Activated CD4-positive, alpha-beta T cell treated with anti-CD3 and anti-CD28 coated beads for 36 hours (primary cell): ENCODE measurements at regions of chr6 and their contacts with region 1.

Region 1: DNA sequence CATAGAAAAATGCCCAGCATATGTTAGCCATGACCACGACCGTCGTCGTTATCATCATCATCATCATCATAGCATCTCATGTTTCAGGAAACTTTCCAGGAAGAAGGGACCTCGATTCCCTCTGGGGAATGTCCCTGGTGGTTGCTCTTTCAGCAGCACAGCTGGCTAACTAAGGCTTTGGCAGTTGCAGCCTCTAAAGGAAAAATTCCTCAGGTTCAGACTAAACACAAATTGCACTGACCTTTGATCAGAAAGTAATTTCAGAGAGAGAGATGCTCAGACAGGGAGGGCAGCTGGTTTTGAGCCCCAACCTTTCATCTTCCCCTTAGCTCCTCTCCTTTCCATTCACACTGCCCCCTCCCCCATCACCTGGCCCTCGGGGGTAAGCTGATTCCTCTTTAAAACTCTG is 5.6 kb upstream of the CFB start:
- DNase-seq: no peak
- ATAC-seq: no peak
- H3K4me3 Mint-ChIP-seq: no peak overlapping the region
- H3K27ac Mint-ChIP-seq: no peak overlapping the region
- H3K4me1 Mint-ChIP-seq: peaks cover 1% of the 10 kb centered on the region
- H3K27me3 Mint-ChIP-seq: peaks cover 7% of the 10 kb centered on the region

Region 2: GRCh38 chr6:31862344-31863227 is 77.7 kb before region 1 on chr6 and contains the start of gene NEU1:
- CTCF ChIA-PET with region 1: no interaction called
- POLR2A ChIA-PET with region 1: no interaction called
- intact Hi-C with region 1: no loop called
- DNase-seq: peak; percentile 100
- ATAC-seq: peak; percentile 98
- H3K4me3 Mint-ChIP-seq: peak within 1 kb of the TSS; percentile 90
- H3K27ac Mint-ChIP-seq: peak within 1 kb of the TSS; percentile 91
- H3K4me1 Mint-ChIP-seq: peaks cover 27% of the 10 kb centered on the region
- H3K27me3 Mint-ChIP-seq: no peaks in the 10 kb centered on the region
- total RNA-seq, gene NEU1: 11.6 to 11.8 TPM

Region 3: DNA sequence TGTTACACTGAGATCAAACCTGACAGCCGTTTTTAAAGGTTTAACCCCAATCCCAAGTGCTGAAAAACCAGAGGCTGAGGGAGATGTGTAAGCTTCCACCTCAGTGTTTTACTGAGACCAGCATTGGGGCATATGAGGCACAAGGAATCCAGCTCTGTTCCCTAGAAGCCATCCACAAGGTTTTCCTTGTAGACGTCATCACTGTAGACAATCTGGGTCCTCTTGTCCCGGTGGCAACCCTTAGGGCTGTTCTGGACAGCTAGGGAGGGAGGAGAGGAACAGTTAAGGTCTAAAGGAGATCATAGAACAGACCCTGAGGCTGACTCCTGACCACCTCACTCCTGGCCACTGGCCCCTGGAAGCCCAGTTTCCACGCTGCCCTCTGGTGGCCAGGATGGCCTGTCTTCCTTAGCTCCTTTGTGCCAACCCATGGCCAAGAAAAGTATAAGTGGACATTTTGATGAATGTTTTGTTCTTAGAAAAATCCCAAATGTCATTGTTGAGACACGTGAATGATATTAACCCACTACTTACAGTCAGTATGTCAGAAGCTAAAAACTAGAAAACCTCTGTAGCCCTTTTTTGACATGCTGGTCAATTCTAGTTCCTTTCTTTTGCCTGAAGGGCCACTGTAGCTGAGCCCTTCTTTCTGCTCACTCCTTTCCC is 12.0 kb after region 1 on chr6:
- CTCF ChIA-PET with region 1: interaction called, 18 read pairs
- POLR2A ChIA-PET with region 1: no interaction called
- intact Hi-C with region 1: no loop called
- DNase-seq: peak; percentile 69
- ATAC-seq: peak; percentile 64
- H3K4me3 Mint-ChIP-seq: no peak overlapping the region
- H3K27ac Mint-ChIP-seq: peak overlapping the region; percentile 3
- H3K4me1 Mint-ChIP-seq: peaks cover 2% of the 10 kb centered on the region
- H3K27me3 Mint-ChIP-seq: no peaks in the 10 kb centered on the region

Region 4: DNA sequence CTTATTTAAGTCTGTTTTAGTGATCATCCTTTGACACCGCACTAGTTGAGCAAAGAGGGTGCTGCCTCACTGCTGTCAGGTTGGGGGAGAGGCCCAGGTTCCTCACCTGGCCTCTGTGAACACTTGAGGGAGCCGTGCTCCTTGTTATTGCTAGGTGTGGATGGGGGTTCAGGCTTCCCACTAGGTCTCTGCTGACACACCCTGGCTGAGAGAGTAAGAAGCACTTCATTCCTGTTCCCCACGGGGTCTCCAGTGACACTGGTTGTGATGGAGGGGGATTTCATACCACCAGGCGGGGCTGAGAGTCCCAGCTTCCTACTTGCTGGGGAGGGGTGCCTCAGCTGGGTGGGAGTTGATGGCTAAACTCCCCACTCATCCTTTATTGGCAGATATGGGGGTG is 294.7 kb after region 1 on chr6:
- CTCF ChIA-PET with region 1: no interaction called
- POLR2A ChIA-PET with region 1: no interaction called
- intact Hi-C with region 1: no loop called
- DNase-seq: peak; percentile 29
- ATAC-seq: peak; percentile 64
- H3K4me3 Mint-ChIP-seq: no peak overlapping the region
- H3K27ac Mint-ChIP-seq: no peak overlapping the region
- H3K4me1 Mint-ChIP-seq: peaks cover 5% of the 10 kb centered on the region
- H3K27me3 Mint-ChIP-seq: no peaks in the 10 kb centered on the region

Region 5: DNA sequence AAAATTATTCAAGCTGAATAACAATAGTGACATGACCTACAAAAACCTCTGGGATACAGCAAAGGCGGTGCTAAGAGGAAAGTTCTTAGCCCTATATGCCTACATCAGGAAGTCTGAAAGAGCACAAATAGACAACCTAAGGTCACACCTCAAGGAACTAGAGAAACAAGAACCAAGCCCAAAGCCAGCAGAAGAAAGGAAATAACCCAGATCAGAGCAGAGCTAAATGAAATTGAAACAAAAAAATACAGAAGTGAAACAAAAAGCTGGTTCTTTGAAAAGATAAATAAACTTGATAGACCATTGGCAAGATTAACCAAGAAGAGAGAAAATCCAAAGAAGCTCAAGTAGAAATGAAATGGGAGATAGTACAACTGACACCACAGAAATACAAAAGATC is 331.2 kb after region 1 on chr6:
- CTCF ChIA-PET with region 1: no interaction called
- POLR2A ChIA-PET with region 1: no interaction called
- intact Hi-C with region 1: no loop called
- DNase-seq: no peak
- ATAC-seq: no peak
- H3K4me3 Mint-ChIP-seq: no peak overlapping the region
- H3K27ac Mint-ChIP-seq: peak overlapping the region; percentile 13
- H3K4me1 Mint-ChIP-seq: peaks cover 16% of the 10 kb centered on the region
- H3K27me3 Mint-ChIP-seq: no peaks in the 10 kb centered on the region

Region 6: GRCh38 chr6:32637219-32637880 is 697.1 kb after region 1 on chr6 and contains the start of gene HLA-DQA1:
- CTCF ChIA-PET with region 1: no interaction called
- POLR2A ChIA-PET with region 1: no interaction called
- intact Hi-C with region 1: no loop called
- DNase-seq: no peak
- ATAC-seq: no peak
- H3K4me3 Mint-ChIP-seq: no peak within 1 kb of the TSS
- H3K27ac Mint-ChIP-seq: no peak within 1 kb of the TSS
- H3K4me1 Mint-ChIP-seq: peaks cover 6% of the 10 kb centered on the region
- H3K27me3 Mint-ChIP-seq: peaks cover 2% of the 10 kb centered on the region
- total RNA-seq, gene HLA-DQA1: 0.32 to 0.61 TPM